Gastrocnemius medialis (tissue), 4 donors: ENCODE measurements at regions of chr22 and their contacts with region 1.

Region 1: GRCh38 chr22:25465949-25466348 is 98.5 kb upstream of the GRK3 start:
- DNase-seq: no peak
- ATAC-seq: no peak
- H3K4me3 ChIP-seq: no peak overlapping the region
- H3K27ac ChIP-seq: no peak overlapping the region
- H3K4me1 ChIP-seq: no peaks in the 10 kb centered on the region
- H3K27me3 ChIP-seq: no peaks in the 10 kb centered on the region
- CTCF ChIP-seq: no peak
- POLR2A ChIP-seq: no peak

Region 2: GRCh38 chr22:25420925-25421904 is 44.7 kb before region 1 on chr22:
- in situ Hi-C with region 1: no loop called
- intact Hi-C with region 1: no loop called
- DNase-seq: no peak
- ATAC-seq: no peak
- H3K4me3 ChIP-seq: peak overlapping the region; percentile 14 to 40 (median 26)
- H3K27ac ChIP-seq: no peak overlapping the region
- H3K4me1 ChIP-seq: peaks cover 5 to 9% of the 10 kb centered on the region in 2 donors
- H3K27me3 ChIP-seq: peaks cover 49 to 62% (median 56%) of the 10 kb centered on the region in 3 donors
- CTCF ChIP-seq: no peak
- POLR2A ChIP-seq: no peak

Region 3: DNA sequence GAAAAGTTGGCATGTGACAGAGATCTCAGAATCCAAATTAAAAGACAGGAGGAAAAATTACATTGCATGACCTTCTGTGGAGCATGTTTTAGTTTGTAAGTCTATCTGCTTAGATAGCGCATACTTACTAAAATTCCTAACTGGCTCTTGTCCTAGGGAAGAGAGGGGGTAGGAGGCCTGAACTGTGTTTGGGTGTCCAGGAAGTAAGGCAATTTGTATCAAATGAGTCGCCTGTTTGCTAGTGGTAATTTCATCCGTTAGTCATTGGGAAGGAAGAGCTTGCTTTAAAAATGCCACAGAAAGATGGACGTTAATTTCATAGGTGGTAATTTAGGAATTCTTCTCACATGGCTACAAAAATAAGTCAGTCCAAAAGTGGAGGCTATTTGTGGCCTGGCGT is 117.0 kb after region 1 on chr22:
- in situ Hi-C with region 1: no loop called
- intact Hi-C with region 1: no loop called
- DNase-seq: no peak
- ATAC-seq: no peak
- H3K4me3 ChIP-seq: no peak overlapping the region
- H3K27ac ChIP-seq: no peak overlapping the region
- H3K4me1 ChIP-seq: no peaks in the 10 kb centered on the region
- H3K27me3 ChIP-seq: no peaks in the 10 kb centered on the region
- CTCF ChIP-seq: no peak
- POLR2A ChIP-seq: no peak

Region 4: DNA sequence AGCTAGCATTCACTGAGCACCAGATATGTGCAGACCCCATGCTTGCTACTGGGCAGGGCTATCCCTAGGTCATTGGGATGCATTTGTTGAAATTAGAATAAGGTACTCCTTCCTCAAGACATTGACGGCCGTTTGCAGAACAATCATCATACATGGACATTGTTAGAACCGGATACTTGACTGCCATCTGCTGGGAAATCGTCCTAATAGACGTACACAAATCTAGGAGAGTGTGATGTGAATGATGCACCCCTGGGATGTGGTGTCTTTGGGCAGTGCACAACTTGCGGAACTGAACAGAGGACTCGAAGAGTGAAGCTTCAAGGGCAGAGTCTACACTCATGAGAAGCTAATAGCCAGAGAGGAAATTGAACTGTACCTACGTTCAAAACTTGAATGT is 311.9 kb after region 1 on chr22:
- in situ Hi-C with region 1: loop called in 3 of 4 experiments (anchors 5 to 10 kb)
- intact Hi-C with region 1: loop called (anchors 1 kb)
- DNase-seq: no peak
- ATAC-seq: peak; percentile 19 to 25
- H3K4me3 ChIP-seq: no peak overlapping the region
- H3K27ac ChIP-seq: peak overlapping the region in 1 of 4 donors; percentile 28
- H3K4me1 ChIP-seq: no peaks in the 10 kb centered on the region
- H3K27me3 ChIP-seq: no peaks in the 10 kb centered on the region
- CTCF ChIP-seq: peak in 1 of 5 experiments; percentile 3
- POLR2A ChIP-seq: no peak